Activated CD8-positive, alpha-beta T cell treated with anti-CD3 and anti-CD28 coated beads, Interleukin-2, amount 10 ng/mL, durations not matched to agents 7 days and 5 days (primary cell): ENCODE measurements at regions of chr2 and their contacts with region 1.

Region 1: GRCh38 chr2:152730591-152731303 is 12.3 kb downstream of the ARL6IP6 start:
- DNase-seq: peak; percentile 70
- ATAC-seq: peak; percentile 97
- H3K4me3 Mint-ChIP-seq: no peak overlapping the region
- H3K27ac Mint-ChIP-seq: no peak overlapping the region
- H3K4me1 Mint-ChIP-seq: peaks cover 27% of the 10 kb centered on the region
- H3K27me3 Mint-ChIP-seq: no peaks in the 10 kb centered on the region

Region 2: GRCh38 chr2:152219077-152219828 is 511.5 kb before region 1 on chr2:
- CTCF ChIA-PET with region 1: no interaction called
- POLR2A ChIA-PET with region 1: no interaction called
- DNase-seq: no peak
- ATAC-seq: no peak
- H3K4me3 Mint-ChIP-seq: no peak overlapping the region
- H3K27ac Mint-ChIP-seq: no peak overlapping the region
- H3K4me1 Mint-ChIP-seq: no peaks in the 10 kb centered on the region
- H3K27me3 Mint-ChIP-seq: peaks cover 9% of the 10 kb centered on the region

Region 3: DNA sequence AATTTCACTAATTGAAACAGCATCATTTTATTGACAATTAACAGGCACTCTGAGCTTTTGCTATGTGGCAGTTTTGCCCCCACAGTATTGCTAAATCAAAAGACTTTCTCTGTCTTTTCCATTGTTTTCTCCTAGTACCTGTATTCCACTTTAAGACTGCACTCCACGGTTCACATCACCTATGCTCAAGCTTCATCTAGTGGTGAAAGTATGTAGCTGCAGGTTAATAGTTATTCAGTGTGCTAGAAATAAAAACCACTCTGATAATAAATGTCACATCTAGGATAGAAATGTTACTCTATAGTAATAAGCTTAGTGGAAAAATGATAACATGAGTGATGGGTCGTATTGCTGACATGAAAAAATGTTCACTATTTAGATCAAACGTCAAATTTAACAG is 12.3 kb after region 1 on chr2:
- CTCF ChIA-PET with region 1: interaction called, 22 read pairs
- POLR2A ChIA-PET with region 1: no interaction called
- DNase-seq: no peak
- ATAC-seq: no peak
- H3K4me3 Mint-ChIP-seq: no peak overlapping the region
- H3K27ac Mint-ChIP-seq: no peak overlapping the region
- H3K4me1 Mint-ChIP-seq: no peaks in the 10 kb centered on the region
- H3K27me3 Mint-ChIP-seq: no peaks in the 10 kb centered on the region